CD4-positive, alpha-beta T cell (primary cell): ENCODE measurements at regions of chr22 and their contacts with region 1.

Region 1: DNA sequence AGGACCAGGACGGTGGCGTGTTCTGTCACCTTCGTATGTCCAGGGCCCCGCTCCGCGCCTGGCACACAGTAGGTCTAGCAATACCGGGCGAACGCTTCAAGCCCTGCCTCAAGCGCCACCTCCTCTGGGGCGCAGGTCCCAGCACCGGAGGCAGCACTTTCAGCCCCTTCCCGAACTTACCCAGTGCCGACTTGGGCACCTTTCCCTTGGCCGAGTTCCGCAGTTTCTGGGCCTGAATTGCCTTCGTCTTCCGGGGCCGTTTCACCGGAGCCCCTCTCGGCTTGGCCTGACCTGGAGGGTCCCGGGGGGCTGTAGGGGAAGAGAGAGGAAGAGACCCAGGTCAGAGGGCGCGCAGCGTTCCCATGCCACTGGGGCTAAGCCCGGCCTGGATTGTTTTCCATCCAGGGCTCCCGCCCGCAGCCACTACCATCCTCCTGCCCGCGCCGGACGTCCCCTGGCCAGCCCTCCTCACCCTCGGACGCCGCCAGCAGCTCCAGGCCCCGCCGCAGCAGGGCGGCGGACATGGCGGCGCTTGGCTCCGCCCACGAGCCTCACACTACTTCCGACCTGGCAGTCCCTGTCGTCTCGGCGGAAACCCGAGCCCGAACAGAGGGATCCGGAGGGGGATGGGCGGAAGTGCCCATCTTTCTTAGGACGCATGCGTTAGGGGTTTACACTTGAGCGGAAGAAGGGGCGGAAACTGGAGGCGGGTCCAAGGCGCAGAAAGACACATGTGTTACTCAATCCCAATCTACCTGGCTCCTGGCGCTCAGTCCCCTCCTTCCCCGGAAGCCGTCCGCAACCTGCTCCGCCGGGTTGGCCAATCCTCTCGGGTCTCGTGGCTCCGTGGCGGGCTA is at the start of gene RPS19BP1:
- DNase-seq: peak; percentile 98 to 100 (median 99)
- ATAC-seq: peak; percentile 85
- H3K4me3 ChIP-seq: peak within 1 kb of the TSS; percentile 73
- H3K4me3 Mint-ChIP-seq: peak within 1 kb of the TSS; percentile 98
- H3K27ac ChIP-seq: peak within 1 kb of the TSS; percentile 74 to 91
- H3K27ac Mint-ChIP-seq: peak within 1 kb of the TSS; percentile 90
- H3K4me1 ChIP-seq: peaks cover 67% of the 10 kb centered on the region
- H3K4me1 Mint-ChIP-seq: peaks cover 64% of the 10 kb centered on the region
- H3K27me3 ChIP-seq: no peaks in the 10 kb centered on the region
- H3K27me3 Mint-ChIP-seq: no peaks in the 10 kb centered on the region
- CTCF ChIP-seq: no peak
- total RNA-seq, gene RPS19BP1: 65.8 to 69.7 TPM

Region 2: GRCh38 chr22:38872172-38872830 is 660.1 kb before region 1 on chr22 and contains the start of gene CBX6:
- CTCF ChIA-PET with region 1: interaction called, 3 read pairs
- POLR2A ChIA-PET with region 1: no interaction called
- intact Hi-C with region 1: loop called in 1 of 2 experiments (anchors 5 kb)
- DNase-seq: peak; percentile 90 to 98 (median 94)
- ATAC-seq: peak; percentile 75
- H3K4me3 ChIP-seq: peak within 1 kb of the TSS; percentile 82
- H3K4me3 Mint-ChIP-seq: peak within 1 kb of the TSS; percentile 96
- H3K27ac ChIP-seq: peak within 1 kb of the TSS; percentile 58 to 73
- H3K27ac Mint-ChIP-seq: peak within 1 kb of the TSS; percentile 92
- H3K4me1 ChIP-seq: peaks cover 62% of the 10 kb centered on the region
- H3K4me1 Mint-ChIP-seq: peaks cover 63% of the 10 kb centered on the region
- H3K27me3 ChIP-seq: no peaks in the 10 kb centered on the region
- H3K27me3 Mint-ChIP-seq: no peaks in the 10 kb centered on the region
- CTCF ChIP-seq: no peak
- total RNA-seq, gene CBX6: 41.6 to 42.8 TPM

Region 3: GRCh38 chr22:39343259-39344048 is 189.0 kb before region 1 on chr22:
- CTCF ChIA-PET with region 1: interaction called, 12 read pairs
- POLR2A ChIA-PET with region 1: interaction called, 7 read pairs
- intact Hi-C with region 1: loop called in 1 of 2 experiments (anchors 1 kb)
- DNase-seq: peak; percentile 39 to 76 (median 51)
- ATAC-seq: peak; percentile 93
- H3K4me3 ChIP-seq: no peak overlapping the region
- H3K4me3 Mint-ChIP-seq: no peak overlapping the region
- H3K27ac ChIP-seq: no peak overlapping the region
- H3K27ac Mint-ChIP-seq: no peak overlapping the region
- H3K4me1 ChIP-seq: peaks cover 6% of the 10 kb centered on the region
- H3K4me1 Mint-ChIP-seq: peaks cover 6% of the 10 kb centered on the region
- H3K27me3 ChIP-seq: peaks cover 0 to 4% of the 10 kb centered on the region in 2 experiments
- H3K27me3 Mint-ChIP-seq: peaks cover 8% of the 10 kb centered on the region
- CTCF ChIP-seq: peak; percentile 71

Region 4: DNA sequence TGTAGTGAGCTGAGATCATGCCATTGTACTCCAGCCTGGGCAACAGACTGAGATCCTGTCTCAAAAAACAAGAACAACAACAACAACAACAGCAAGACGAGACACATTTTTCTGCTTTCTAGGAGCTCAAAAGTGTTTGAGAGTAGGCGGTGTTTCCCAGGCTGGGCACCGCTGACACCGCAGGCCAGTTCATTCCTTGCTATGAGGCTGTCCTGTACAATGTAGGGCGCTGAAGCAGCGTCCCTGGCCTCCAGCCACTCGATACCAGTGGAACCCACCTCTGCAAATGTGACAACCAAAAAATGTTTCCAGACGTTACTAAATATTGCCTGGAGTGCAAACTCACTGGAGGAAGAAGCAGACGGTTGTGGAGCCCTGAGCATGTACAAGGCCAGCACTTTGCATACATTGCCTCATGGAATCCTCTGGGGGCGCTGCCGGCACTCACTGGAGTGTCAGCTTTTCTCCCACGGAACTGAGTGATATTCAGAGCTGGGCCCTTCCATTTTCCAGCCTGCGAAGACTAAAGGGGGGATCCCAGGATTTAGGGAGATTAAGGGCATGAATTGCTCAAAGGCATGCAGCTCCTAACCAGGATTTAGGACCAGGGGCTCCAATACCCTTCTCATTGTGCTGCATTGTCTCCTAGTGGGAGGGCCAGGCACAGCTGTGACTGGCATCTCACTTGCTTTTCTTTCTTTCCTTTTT is 36.2 kb before region 1 on chr22:
- CTCF ChIA-PET with region 1: interaction called, 44 read pairs
- POLR2A ChIA-PET with region 1: interaction called, 10 read pairs
- intact Hi-C with region 1: loop called (anchors 1 kb)
- DNase-seq: peak in 12 of 14 experiments; percentile 29 to 75 (median 48)
- ATAC-seq: peak; percentile 77
- H3K4me3 ChIP-seq: no peak overlapping the region
- H3K4me3 Mint-ChIP-seq: no peak overlapping the region
- H3K27ac ChIP-seq: no peak overlapping the region
- H3K27ac Mint-ChIP-seq: no peak overlapping the region
- H3K4me1 ChIP-seq: peaks cover 14% of the 10 kb centered on the region
- H3K4me1 Mint-ChIP-seq: peaks cover 11% of the 10 kb centered on the region
- H3K27me3 ChIP-seq: no peaks in the 10 kb centered on the region
- H3K27me3 Mint-ChIP-seq: no peaks in the 10 kb centered on the region
- CTCF ChIP-seq: peak; percentile 72

Region 5: GRCh38 chr22:39622881-39623367 is 90.5 kb after region 1 on chr22:
- CTCF ChIA-PET with region 1: no interaction called
- POLR2A ChIA-PET with region 1: no interaction called
- intact Hi-C with region 1: loop called in 1 of 2 experiments (anchors 5 kb)
- DNase-seq: peak; percentile 59 to 85 (median 65)
- ATAC-seq: peak; percentile 75
- H3K4me3 ChIP-seq: no peak overlapping the region
- H3K4me3 Mint-ChIP-seq: no peak overlapping the region
- H3K27ac ChIP-seq: no peak overlapping the region
- H3K27ac Mint-ChIP-seq: no peak overlapping the region
- H3K4me1 ChIP-seq: peaks cover 12% of the 10 kb centered on the region
- H3K4me1 Mint-ChIP-seq: peaks cover 10% of the 10 kb centered on the region
- H3K27me3 ChIP-seq: no peaks in the 10 kb centered on the region
- H3K27me3 Mint-ChIP-seq: peaks cover 6% of the 10 kb centered on the region
- CTCF ChIP-seq: peak; percentile 72

Region 6: DNA sequence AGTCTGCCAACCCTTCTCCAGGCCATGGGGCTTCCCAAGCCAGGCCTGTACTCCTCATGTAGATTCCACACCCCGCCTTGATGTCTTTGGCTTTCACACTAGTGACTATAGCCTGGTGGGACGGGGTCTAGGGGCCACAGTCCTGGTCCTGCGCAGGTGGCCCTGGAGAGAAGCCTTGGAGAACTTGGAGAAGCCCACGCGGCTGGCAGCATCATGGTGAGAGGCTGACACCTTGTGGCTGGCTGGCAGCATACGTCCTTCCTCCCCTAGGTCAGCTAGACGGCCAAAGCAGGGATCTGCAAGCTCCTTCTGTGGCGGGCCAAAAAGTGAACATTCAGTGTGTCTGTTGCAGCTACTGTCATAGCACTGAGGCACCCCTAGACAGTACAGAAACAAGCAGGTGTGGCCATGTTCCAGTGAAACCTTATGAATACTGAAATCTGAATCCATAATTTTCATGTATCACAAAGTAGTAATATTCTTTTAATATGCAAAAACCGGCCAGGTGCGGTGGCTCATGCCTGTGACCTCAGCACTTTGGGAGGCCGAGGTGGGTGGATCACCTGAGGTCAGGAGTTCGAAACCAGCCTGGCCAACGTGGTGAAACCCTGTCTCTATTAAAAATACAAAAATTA is 504.3 kb after region 1 on chr22:
- CTCF ChIA-PET with region 1: interaction called, 6 read pairs
- POLR2A ChIA-PET with region 1: no interaction called
- intact Hi-C with region 1: loop called in 1 of 2 experiments (anchors 2 kb)
- DNase-seq: peak in 13 of 14 experiments; percentile 25 to 77 (median 39)
- ATAC-seq: peak; percentile 74
- H3K4me3 ChIP-seq: no peak overlapping the region
- H3K4me3 Mint-ChIP-seq: no peak overlapping the region
- H3K27ac ChIP-seq: no peak overlapping the region
- H3K27ac Mint-ChIP-seq: no peak overlapping the region
- H3K4me1 ChIP-seq: no peaks in the 10 kb centered on the region
- H3K4me1 Mint-ChIP-seq: no peaks in the 10 kb centered on the region
- H3K27me3 ChIP-seq: peaks cover 0 to 6% of the 10 kb centered on the region in 2 experiments
- H3K27me3 Mint-ChIP-seq: peaks cover 12% of the 10 kb centered on the region
- CTCF ChIP-seq: peak; percentile 63